ENCODE measurements at regions of chr6 and their contacts with region 1.

Region 1: GRCh38 chr6:116680975-116681808 is at the start of gene KPNA5:
- DNase-seq: peak; percentile 97
- H3K4me3 Mint-ChIP-seq: peak within 1 kb of the TSS; percentile 99
- H3K27ac Mint-ChIP-seq: peak within 1 kb of the TSS; percentile 99
- H3K4me1 Mint-ChIP-seq: peaks cover 29% of the 10 kb centered on the region
- H3K27me3 Mint-ChIP-seq: no peaks in the 10 kb centered on the region
- total RNA-seq, gene KPNA5: 7.2 and 7.7 TPM in 2 replicates

Region 2: GRCh38 chr6:116695401-116695800 is 14.2 kb after region 1 on chr6:
- intact Hi-C with region 1: loop called (anchors 1 kb)
- DNase-seq: peak; percentile 55
- H3K4me3 Mint-ChIP-seq: no peak overlapping the region
- H3K27ac Mint-ChIP-seq: no peak overlapping the region
- H3K4me1 Mint-ChIP-seq: peaks cover 20% of the 10 kb centered on the region
- H3K27me3 Mint-ChIP-seq: no peaks in the 10 kb centered on the region

Region 3: GRCh38 chr6:116969211-116969863 is 288.1 kb after region 1 on chr6:
- intact Hi-C with region 1: no loop called
- DNase-seq: peak; percentile 69
- H3K4me3 Mint-ChIP-seq: no peak overlapping the region
- H3K27ac Mint-ChIP-seq: no peak overlapping the region
- H3K4me1 Mint-ChIP-seq: no peaks in the 10 kb centered on the region
- H3K27me3 Mint-ChIP-seq: peaks cover 4% of the 10 kb centered on the region

Measured in activated CD4-positive, alpha-beta T cell treated with anti-CD3 and anti-CD28 coated beads, Interleukin-2, amount 10 ng/mL, durations not matched to agents 24 days and 14 days (primary cell).